CD8-positive, alpha-beta T cell (primary cell): ENCODE measurements at regions of chr12 and their contacts with region 1.

Region 1: GRCh38 chr12:95217377-95218149 is at the starts of genes FGD6 and VEZT:
- DNase-seq: peak; percentile 93 to 99 (median 98)
- ATAC-seq: peak; percentile 91
- H3K4me3 ChIP-seq: peak within 1 kb of the TSS; percentile 96
- H3K4me3 Mint-ChIP-seq: peak within 1 kb of the TSS; percentile 96
- H3K27ac ChIP-seq: peak within 1 kb of the TSS; percentile 90 to 95
- H3K27ac Mint-ChIP-seq: peak within 1 kb of the TSS; percentile 97
- H3K4me1 ChIP-seq: peaks cover 17% of the 10 kb centered on the region
- H3K4me1 Mint-ChIP-seq: peaks cover 37% of the 10 kb centered on the region
- H3K27me3 ChIP-seq: no peaks in the 10 kb centered on the region
- H3K27me3 Mint-ChIP-seq: peaks cover 5% of the 10 kb centered on the region
- CTCF ChIP-seq: peak; percentile 41
- total RNA-seq, gene FGD6: 0.94 to 1.6 TPM
- total RNA-seq, gene VEZT: 48.4 to 57.7 TPM

Region 2: DNA sequence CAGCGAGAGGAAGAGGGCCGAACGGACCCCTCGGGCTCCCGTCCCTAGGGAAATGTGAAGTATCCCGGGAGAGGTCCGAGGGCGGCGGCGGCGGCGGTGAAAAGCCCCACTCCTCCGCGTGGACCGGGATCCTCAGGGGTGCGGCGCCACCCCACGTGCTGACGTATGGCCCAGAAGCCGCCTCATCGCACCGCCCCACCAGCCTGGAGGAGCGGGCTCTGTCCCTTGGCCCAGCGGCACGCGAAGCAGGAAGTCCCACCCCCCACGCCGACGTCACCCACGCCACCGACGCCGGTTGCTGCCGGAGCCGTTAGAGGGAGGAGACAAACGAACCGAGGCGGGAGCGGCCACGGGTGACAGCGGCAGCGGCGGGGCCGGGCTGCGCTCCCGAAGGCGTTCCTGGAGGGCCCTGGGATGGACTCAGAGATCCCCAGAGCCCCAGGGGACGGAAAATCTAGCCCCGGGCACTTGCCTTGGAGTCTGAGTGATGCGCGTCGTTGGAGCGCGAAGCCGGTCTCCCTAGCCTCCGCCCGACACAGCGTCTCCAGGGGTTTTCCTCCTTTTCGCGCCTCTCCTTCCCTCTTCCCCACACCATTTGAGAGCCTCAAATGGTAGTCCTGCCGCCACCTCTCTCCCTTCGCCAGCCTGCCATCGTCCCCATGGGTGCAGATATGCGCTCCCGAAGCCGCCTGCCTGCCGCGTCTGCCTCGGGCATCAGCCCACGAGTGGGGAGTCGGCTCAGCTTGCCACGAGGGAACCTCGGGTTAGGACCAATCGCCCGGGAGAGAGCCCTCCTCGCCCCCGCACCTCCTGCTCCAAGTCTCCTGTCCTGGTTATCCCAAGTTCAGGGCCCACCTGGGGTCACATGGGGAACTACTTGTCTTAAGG is 757.6 kb before region 1 on chr12 and contains the start of gene CEP83:
- CTCF ChIA-PET with region 1: no interaction called
- POLR2A ChIA-PET with region 1: no interaction called
- intact Hi-C with region 1: loop called (anchors 2 to 10 kb)
- DNase-seq: peak; percentile 90 to 98 (median 97)
- ATAC-seq: peak; percentile 96
- H3K4me3 ChIP-seq: peak within 1 kb of the TSS; percentile 94 to 96
- H3K4me3 Mint-ChIP-seq: peak within 1 kb of the TSS; percentile 96
- H3K27ac ChIP-seq: peak within 1 kb of the TSS; percentile 91 to 93
- H3K27ac Mint-ChIP-seq: peak within 1 kb of the TSS; percentile 94
- H3K4me1 ChIP-seq: peaks cover 6% of the 10 kb centered on the region
- H3K4me1 Mint-ChIP-seq: peaks cover 33% of the 10 kb centered on the region
- H3K27me3 ChIP-seq: peaks cover 0 to 2% of the 10 kb centered on the region in 2 experiments
- H3K27me3 Mint-ChIP-seq: peaks cover 5% of the 10 kb centered on the region
- CTCF ChIP-seq: no peak
- total RNA-seq, gene CEP83: 9.7 to 11.2 TPM

Region 3: GRCh38 chr12:95072900-95073697 is 144.5 kb before region 1 on chr12 and contains the start of gene NR2C1:
- CTCF ChIA-PET with region 1: interaction called, 6 read pairs
- POLR2A ChIA-PET with region 1: interaction called, 8 read pairs
- intact Hi-C with region 1: loop called (anchors 1 kb)
- DNase-seq: peak; percentile 83 to 97 (median 91)
- ATAC-seq: peak; percentile 98
- H3K4me3 ChIP-seq: peak within 1 kb of the TSS; percentile 86 to 96
- H3K4me3 Mint-ChIP-seq: peak within 1 kb of the TSS; percentile 97
- H3K27ac ChIP-seq: peak within 1 kb of the TSS; percentile 71 to 74
- H3K27ac Mint-ChIP-seq: peak within 1 kb of the TSS; percentile 95
- H3K4me1 ChIP-seq: peaks cover 5% of the 10 kb centered on the region
- H3K4me1 Mint-ChIP-seq: peaks cover 26% of the 10 kb centered on the region
- H3K27me3 ChIP-seq: no peaks in the 10 kb centered on the region
- H3K27me3 Mint-ChIP-seq: no peaks in the 10 kb centered on the region
- CTCF ChIP-seq: no peak
- total RNA-seq, gene NR2C1: 40.7 to 49.2 TPM

Region 4: GRCh38 chr12:95548539-95549391 is 331.2 kb after region 1 on chr12:
- CTCF ChIA-PET with region 1: no interaction called
- POLR2A ChIA-PET with region 1: interaction called, 8 read pairs
- intact Hi-C with region 1: loop called (anchors 1 to 5 kb)
- DNase-seq: peak; percentile 47 to 88 (median 71)
- ATAC-seq: peak; percentile 73
- H3K4me3 ChIP-seq: peak overlapping the region; percentile 65 to 81
- H3K4me3 Mint-ChIP-seq: peak overlapping the region; percentile 95
- H3K27ac ChIP-seq: peak overlapping the region; percentile 77 to 86
- H3K27ac Mint-ChIP-seq: peak overlapping the region; percentile 96
- H3K4me1 ChIP-seq: peaks cover 25% of the 10 kb centered on the region
- H3K4me1 Mint-ChIP-seq: peaks cover 57% of the 10 kb centered on the region
- H3K27me3 ChIP-seq: peaks cover 0 to 2% of the 10 kb centered on the region in 2 experiments
- H3K27me3 Mint-ChIP-seq: no peaks in the 10 kb centered on the region
- CTCF ChIP-seq: no peak

Region 5: DNA sequence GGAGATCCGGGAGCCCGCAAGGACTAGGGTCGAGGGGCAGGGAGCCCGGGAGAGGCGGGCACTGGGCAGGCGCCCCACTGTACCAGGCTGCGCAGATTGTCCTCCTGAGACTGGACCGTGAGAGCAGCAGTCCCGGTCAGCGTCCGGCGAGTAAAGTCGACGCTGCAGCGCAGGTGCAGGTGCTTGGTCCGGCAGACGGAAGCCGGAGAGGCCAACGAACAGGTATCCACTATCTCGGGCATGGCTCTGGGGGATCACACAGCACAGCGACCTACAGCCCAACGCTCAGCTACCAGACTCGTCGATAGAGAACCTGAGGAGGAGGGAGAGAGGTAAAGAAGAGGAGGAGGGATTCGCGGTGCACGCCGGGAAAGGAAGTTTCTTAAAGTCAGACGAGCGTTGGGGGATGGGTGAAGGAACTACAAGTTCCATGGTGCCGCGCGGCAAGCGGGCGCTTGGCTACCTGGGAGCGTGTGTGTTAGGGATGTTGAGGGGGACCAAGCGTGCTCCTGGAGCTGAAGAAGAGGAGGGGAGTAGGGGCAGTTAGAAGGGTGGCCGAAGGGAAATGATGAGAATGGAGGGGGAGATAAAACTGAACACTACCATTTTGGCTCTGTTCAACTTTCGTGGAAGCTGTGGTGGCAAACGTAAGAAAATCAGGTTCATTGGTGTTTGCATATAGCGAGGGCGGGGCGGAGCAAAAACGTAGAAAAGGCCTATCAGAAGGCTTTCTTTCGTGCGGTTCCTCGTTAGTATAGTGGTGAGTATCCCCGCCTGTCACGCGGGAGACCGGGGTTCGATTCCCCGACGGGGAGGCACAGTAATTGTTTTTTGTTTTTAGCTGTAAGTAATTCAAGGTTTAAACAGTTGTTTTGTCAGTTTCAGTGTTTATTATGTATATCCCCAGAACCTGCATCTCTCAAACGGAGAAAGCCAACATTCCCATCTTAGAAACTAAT is 818.0 kb after region 1 on chr12 and contains the start of gene LTA4H:
- CTCF ChIA-PET with region 1: no interaction called
- POLR2A ChIA-PET with region 1: no interaction called
- intact Hi-C with region 1: loop called (anchors 2 to 5 kb)
- DNase-seq: peak; percentile 90 to 99 (median 97)
- ATAC-seq: peak; percentile 92
- H3K4me3 ChIP-seq: peak within 1 kb of the TSS; percentile 65 to 92
- H3K4me3 Mint-ChIP-seq: no peak within 1 kb of the TSS
- H3K27ac ChIP-seq: peak within 1 kb of the TSS; percentile 68 to 78
- H3K27ac Mint-ChIP-seq: no peak within 1 kb of the TSS
- H3K4me1 ChIP-seq: peaks cover 14% of the 10 kb centered on the region
- H3K4me1 Mint-ChIP-seq: peaks cover 12% of the 10 kb centered on the region
- H3K27me3 ChIP-seq: no peaks in the 10 kb centered on the region
- H3K27me3 Mint-ChIP-seq: no peaks in the 10 kb centered on the region
- CTCF ChIP-seq: no peak
- total RNA-seq, gene LTA4H: 38.4 to 42.9 TPM